ENCODE measurements at regions of chr1 and their contacts with region 1.

Region 1: DNA sequence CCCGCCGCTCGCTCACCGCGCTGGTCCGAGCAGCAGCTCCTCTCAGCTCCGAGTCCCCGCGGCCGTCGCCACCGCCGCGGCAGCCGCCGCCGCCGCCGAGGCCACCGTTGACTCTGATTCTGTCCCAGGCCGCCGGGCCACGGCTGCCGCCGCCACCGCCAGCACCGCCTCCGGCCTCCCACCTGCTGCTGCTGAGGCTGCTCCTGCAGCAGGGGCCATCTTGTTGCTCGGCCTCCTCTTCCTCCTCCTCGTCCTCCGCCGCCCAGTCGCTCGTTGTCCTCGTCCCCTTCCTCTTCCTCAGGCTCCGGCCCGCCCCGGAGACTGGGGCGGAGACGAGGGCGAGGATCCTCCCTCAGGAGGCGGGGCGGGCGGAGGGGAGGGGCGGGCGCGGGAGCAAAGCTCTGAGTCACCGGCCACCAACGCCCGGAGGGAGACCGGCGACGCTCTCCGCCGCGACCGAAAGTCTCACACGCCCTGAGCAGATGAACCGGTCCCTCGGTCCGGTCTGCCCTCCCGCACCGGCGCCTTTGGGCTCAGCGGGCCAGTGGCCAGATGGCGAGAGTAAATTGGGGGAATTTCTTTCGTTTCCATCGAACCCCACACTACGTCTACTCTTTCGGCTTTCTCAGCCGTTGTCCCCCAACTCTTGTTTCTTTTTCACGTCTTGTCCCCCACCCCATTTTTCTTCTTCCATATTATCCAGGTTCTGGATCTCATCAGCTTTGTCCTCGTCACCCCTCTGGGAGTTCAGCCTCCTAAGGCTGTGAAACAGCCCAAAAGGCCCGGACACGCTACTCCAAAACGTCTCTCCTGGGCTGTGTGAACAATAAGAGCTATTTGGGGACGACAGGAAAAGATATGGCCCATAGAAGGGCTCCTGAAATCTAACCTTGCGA is at the start of gene RC3H1:
- DNase-seq: peak; percentile 84
- H3K4me3 Mint-ChIP-seq: peak within 1 kb of the TSS; percentile 99
- H3K27ac Mint-ChIP-seq: peak within 1 kb of the TSS; percentile 96
- H3K4me1 Mint-ChIP-seq: peaks cover 42% of the 10 kb centered on the region
- H3K27me3 Mint-ChIP-seq: peaks cover 2% of the 10 kb centered on the region
- total RNA-seq, gene RC3H1: 47.1 and 49.5 TPM in 2 replicates

Region 2: GRCh38 chr1:173420330-173420806 is 602.0 kb before region 1 on chr1:
- intact Hi-C with region 1: loop called (anchors 1 kb)
- DNase-seq: peak; percentile 42
- H3K4me3 Mint-ChIP-seq: no peak overlapping the region
- H3K27ac Mint-ChIP-seq: no peak overlapping the region
- H3K4me1 Mint-ChIP-seq: peaks cover 13% of the 10 kb centered on the region
- H3K27me3 Mint-ChIP-seq: no peaks in the 10 kb centered on the region

Region 3: DNA sequence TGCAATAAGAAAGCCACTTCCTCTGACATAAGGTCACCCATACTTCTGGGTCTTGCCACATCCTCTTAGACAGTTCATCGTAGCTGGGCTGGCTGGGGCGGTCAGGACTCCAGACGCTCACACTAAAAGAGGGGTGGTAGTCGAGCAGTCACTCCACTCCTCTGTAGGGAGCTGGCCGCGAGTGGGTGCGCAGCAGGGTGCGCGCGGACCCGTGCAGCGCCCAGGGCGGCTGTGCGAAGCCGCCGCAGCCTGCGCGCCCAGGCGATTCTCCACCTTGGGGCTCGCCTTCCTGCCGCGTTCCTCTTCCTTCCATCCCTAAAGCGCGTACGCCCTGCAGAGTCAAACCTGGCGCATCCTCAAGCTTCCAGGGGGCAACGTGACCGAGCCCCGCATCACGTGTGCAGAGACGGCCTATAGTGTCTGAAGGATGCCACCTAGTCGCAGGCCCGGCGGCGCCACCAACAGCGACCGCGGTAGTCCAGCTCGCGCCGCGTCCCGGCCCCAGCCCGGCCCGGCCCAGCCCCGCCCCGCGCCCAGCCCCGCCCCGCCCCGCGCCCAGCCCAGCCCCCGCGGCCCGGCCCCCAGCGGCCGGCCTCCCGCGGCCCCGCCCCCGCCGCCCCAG is 545.6 kb before region 1 on chr1:
- intact Hi-C with region 1: loop called (anchors 2 kb)
- DNase-seq: peak; percentile 74
- H3K4me3 Mint-ChIP-seq: peak overlapping the region; percentile 92
- H3K27ac Mint-ChIP-seq: peak overlapping the region; percentile 93
- H3K4me1 Mint-ChIP-seq: peaks cover 65% of the 10 kb centered on the region
- H3K27me3 Mint-ChIP-seq: no peaks in the 10 kb centered on the region

Region 4: DNA sequence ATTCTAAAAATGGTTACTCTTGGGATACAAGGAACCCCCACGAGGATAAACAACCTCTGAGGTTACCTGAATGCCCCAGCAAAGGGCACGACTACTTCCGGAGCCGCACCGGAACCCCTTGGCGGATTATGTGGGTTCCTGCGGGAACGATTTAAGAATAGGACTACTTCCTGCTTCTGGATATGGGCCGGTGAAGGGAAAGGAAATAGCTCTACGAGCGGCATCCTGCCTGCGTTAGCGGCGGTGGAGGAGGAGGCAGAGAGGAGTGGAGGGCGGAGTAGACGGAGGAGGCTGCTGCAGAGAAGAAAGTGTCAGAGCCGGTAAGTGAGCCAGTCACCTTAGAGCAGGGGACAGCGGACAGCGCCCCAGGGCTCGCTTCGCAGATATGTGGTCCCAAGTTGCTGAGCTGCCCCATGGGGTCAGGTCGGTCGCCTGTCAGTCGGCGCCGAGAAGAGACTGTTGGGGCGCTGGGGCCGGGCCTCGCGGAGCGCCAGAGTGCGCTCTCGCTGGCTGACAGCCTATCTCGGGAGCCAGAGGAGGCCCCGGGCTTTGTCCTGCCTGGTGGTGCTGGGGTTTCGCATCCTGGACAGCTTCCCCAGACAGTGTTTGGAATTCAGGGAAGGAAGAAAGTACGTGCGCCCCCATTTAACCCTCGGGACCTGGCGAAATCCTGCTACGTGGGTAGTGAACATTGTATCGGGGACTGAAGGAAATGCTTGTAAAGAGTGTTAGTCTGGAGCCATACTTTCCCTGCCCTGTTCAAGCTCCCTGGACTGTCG is 307.4 kb before region 1 on chr1 and contains the start of gene KLHL20:
- intact Hi-C with region 1: loop called (anchors 2 kb)
- DNase-seq: peak; percentile 84
- H3K4me3 Mint-ChIP-seq: peak within 1 kb of the TSS; percentile 93
- H3K27ac Mint-ChIP-seq: peak within 1 kb of the TSS; percentile 98
- H3K4me1 Mint-ChIP-seq: peaks cover 30% of the 10 kb centered on the region
- H3K27me3 Mint-ChIP-seq: peaks cover 14% of the 10 kb centered on the region
- total RNA-seq, gene KLHL20: 17.8 and 18.3 TPM in 2 replicates

Region 5: DNA sequence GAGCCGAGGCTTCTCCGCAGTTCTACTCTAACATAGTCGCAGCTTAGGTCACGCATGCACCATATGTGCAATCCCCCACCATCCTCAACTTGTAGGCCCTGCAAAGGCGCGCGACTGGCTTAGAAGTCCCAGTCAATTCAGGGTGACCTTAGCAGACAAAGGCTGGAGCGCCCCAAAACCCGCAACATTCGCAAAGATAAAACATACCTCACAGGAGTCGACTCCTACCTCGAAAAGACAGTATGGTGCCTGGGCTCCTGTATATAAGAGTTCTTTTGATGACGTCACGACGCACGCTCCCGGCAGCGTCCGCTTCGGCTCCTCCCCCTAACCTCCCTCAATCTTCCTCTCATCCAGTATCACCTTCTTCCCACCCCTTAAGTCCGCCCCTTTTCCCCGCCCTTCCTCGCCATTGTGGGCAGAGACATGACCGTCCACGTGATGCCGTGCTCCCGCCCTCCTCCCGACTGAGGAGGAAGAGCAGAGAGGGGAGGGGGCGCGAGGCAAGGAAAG is 154.5 kb before region 1 on chr1 and contains the start of gene GAS5:
- intact Hi-C with region 1: loop called (anchors 1 kb)
- DNase-seq: peak; percentile 99
- H3K4me3 Mint-ChIP-seq: peak within 1 kb of the TSS; percentile 98
- H3K27ac Mint-ChIP-seq: peak within 1 kb of the TSS; percentile 98
- H3K4me1 Mint-ChIP-seq: peaks cover 66% of the 10 kb centered on the region
- H3K27me3 Mint-ChIP-seq: no peaks in the 10 kb centered on the region
- total RNA-seq, gene GAS5: 653 and 688 TPM in 2 replicates

Region 6: DNA sequence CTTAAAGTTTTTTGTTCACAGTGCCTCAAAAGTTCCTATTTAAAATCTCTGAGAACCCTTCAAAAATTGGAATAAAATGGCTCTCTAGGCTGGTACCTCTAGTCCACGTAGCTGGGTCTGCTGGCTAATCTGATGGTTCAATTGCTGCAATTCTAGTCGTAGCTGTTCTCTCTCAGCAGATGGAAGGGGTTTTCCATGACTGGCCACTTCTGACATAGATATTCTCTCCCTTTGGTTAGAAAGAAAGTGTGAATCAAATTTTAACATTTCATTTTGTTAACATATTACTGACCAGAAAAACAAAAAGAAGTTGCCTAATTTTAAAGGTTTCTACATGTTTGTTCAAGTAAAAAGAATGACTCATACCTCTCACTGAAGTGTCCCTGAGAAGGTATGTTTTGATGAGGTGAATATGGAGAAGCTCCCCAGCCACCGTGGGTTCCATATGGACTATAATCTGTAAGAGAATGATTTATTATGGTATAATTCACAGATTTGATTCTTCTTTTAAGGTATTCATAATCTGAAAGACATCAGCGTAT is 75.9 kb before region 1 on chr1:
- intact Hi-C with region 1: no loop called
- DNase-seq: no peak
- H3K4me3 Mint-ChIP-seq: no peak overlapping the region
- H3K27ac Mint-ChIP-seq: no peak overlapping the region
- H3K4me1 Mint-ChIP-seq: no peaks in the 10 kb centered on the region
- H3K27me3 Mint-ChIP-seq: no peaks in the 10 kb centered on the region

Region 7: DNA sequence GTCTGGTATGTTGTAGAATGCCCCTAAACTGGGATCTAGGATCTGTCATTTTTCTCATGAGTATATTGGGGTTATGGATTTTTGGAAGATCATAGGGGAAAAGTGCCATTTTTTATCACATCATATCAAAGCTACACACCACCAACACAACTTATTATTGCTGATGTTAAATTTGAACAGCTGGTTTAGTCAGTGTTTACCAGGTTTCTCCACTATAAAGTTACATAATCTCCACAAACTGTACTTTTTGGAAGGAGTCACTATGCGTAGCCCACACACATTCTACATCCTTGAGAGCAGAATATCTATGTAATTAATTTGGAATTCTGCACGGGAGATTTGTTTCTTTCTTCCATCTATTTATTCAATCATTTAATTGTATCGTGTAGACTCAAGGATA is 35.4 kb before region 1 on chr1:
- intact Hi-C with region 1: no loop called
- DNase-seq: no peak
- H3K4me3 Mint-ChIP-seq: no peak overlapping the region
- H3K27ac Mint-ChIP-seq: no peak overlapping the region
- H3K4me1 Mint-ChIP-seq: no peaks in the 10 kb centered on the region
- H3K27me3 Mint-ChIP-seq: no peaks in the 10 kb centered on the region

Region 8: GRCh38 chr1:174005032-174005431 is 17.3 kb before region 1 on chr1:
- intact Hi-C with region 1: no loop called
- DNase-seq: no peak
- H3K4me3 Mint-ChIP-seq: no peak overlapping the region
- H3K27ac Mint-ChIP-seq: no peak overlapping the region
- H3K4me1 Mint-ChIP-seq: peaks cover 25% of the 10 kb centered on the region
- H3K27me3 Mint-ChIP-seq: no peaks in the 10 kb centered on the region

Region 9: DNA sequence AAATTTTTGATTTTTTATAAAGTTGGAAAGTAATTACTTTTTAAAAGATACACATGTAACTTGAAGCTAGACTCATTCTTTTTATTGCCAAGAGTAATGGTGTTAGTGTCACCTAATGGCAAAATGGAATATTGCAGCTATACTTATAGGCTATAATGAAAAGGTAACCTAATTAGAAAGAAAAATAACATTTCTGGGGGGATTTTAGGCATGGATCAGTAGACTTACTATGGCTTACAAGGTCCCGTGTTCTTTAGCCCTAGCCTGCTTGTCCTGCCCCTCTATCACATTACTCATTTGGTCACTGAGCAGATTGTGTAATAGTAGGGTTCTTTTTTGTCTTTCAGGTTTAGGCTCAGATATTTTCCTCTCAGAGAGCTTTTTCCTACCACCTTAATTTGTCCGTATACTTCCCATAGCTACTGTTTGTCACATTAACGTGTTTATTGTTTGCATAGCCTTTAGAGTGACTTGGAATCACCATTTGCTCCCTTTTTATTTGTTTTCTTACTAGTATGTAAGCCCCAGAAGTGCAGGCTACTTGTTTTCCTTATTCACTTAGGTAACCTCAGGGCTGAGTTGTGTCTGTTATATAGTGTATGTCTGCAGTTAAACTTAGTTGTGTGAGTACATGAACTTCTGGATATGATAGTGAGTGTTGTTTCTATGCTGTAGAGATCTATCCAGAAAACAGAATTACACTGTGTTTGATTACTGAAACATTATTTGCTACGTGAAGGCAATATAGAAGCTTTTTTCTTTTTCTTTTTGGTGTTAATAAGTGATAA is 195.7 kb after region 1 on chr1:
- intact Hi-C with region 1: loop called (anchors 5 kb)
- DNase-seq: no peak
- H3K4me3 Mint-ChIP-seq: no peak overlapping the region
- H3K27ac Mint-ChIP-seq: no peak overlapping the region
- H3K4me1 Mint-ChIP-seq: no peaks in the 10 kb centered on the region
- H3K27me3 Mint-ChIP-seq: no peaks in the 10 kb centered on the region